ENCODE measurements at regions of chr19 and their contacts with region 1.

Region 1: GRCh38 chr19:35757749-35758608 is at the start of gene PROSER3:
- DNase-seq: peak; percentile 99 to 100 (median 100)
- H3K4me3 ChIP-seq: peak within 1 kb of the TSS; percentile 90 to 91
- H3K4me3 Mint-ChIP-seq: peak within 1 kb of the TSS; percentile 94 to 100 (median 98)
- H3K27ac ChIP-seq: peak within 1 kb of the TSS; percentile 89
- H3K27ac Mint-ChIP-seq: peak within 1 kb of the TSS; percentile 94 to 99 (median 97)
- H3K4me1 ChIP-seq: peaks cover 36% of the 10 kb centered on the region
- H3K4me1 Mint-ChIP-seq: peaks cover 17 to 40% (median 27%) of the 10 kb centered on the region in 4 donors
- H3K27me3 ChIP-seq: no peaks in the 10 kb centered on the region
- H3K27me3 Mint-ChIP-seq: peaks cover 0 to 2% of the 10 kb centered on the region in 2 donors
- total RNA-seq, gene PROSER3: 45.1 to 46.5 TPM

Region 2: DNA sequence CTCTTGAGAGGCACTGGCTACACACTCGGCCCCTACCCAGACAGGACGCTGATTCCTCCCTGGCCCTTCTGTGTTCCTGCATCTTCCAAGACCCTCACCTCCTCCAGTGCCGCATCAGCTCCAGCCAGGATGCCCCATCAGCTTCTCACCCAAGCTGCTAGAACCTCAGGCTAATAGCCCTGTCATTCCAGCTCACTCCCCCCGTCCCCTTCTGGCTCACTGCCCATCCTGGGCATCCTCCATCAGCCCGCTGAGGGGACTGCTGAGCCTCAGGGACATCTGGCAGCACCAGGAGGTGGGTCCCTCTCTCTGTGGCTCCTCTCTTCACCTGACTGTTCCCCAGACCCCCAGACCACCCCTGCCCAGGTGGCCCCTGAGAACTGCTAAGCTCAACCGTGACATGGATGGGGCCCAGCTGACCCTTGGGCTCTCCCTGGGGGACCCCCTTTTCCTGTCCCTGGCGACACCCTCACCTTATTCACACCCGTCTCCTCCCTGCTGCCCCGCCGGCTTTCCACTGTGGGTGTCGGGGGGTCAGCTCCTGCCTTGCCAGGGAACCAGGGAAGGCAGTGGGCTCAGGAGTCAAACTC is 394.9 kb before region 1 on chr19:
- CTCF ChIA-PET with region 1: no interaction called
- POLR2A ChIA-PET with region 1: no interaction called
- intact Hi-C with region 1: no loop called
- DNase-seq: no peak
- H3K4me3 ChIP-seq: no peak overlapping the region
- H3K4me3 Mint-ChIP-seq: no peak overlapping the region
- H3K27ac ChIP-seq: no peak overlapping the region
- H3K27ac Mint-ChIP-seq: no peak overlapping the region
- H3K4me1 ChIP-seq: peaks cover 2% of the 10 kb centered on the region
- H3K4me1 Mint-ChIP-seq: peaks cover 3 to 4% (median 3%) of the 10 kb centered on the region in 4 donors
- H3K27me3 ChIP-seq: no peaks in the 10 kb centered on the region
- H3K27me3 Mint-ChIP-seq: peaks cover 3 to 7% of the 10 kb centered on the region in 2 donors

Region 3: DNA sequence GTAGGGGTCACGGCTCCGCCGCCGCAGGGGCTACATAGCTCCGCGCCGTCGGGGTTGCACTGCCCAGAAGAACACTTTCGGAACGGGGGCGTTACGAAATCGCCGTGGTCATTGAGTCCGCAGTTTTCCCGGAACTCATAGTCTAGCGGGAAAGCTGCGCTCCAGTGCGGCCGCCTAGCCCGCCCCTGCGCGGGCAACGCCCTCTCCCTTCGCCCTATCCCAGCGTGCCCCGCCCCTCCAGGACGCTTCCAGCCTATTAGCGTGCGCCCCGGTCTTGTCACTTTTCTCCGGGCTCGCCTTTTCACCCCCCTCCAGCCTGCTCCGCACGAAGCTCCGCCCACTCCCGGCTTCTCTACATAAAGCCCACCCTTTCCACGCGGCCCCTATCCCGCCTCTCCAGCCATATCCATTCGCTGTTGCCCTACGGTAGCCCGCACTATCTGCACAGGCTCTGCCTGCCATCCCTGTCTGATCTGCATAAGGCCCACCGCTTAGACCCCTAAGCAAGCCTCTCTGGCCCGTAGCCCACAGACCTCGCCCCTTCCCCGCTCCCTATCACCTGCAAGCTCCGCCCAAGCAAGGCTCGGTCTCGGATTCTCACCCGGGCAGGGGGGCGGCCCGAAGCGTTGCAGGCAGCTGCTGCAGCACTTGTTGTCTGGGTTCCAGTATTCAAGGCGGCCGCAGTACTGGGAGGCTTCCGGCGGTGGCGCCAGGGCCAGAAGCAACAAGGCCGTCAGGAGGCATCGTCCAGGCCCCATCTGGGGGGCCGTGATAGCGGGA is 17.4 kb before region 1 on chr19:
- CTCF ChIA-PET with region 1: no interaction called
- POLR2A ChIA-PET with region 1: interaction called, 23 read pairs
- intact Hi-C with region 1: no loop called
- DNase-seq: peak; percentile 90 to 97 (median 91)
- H3K4me3 ChIP-seq: peak overlapping the region; percentile 83 to 88
- H3K4me3 Mint-ChIP-seq: peak overlapping the region; percentile 88 to 98 (median 90)
- H3K27ac ChIP-seq: peak overlapping the region; percentile 77
- H3K27ac Mint-ChIP-seq: peak overlapping the region; percentile 93 to 99 (median 94)
- H3K4me1 ChIP-seq: peaks cover 59% of the 10 kb centered on the region
- H3K4me1 Mint-ChIP-seq: peaks cover 17 to 65% (median 42%) of the 10 kb centered on the region in 4 donors
- H3K27me3 ChIP-seq: no peaks in the 10 kb centered on the region
- H3K27me3 Mint-ChIP-seq: no peaks in the 10 kb centered on the region

Region 4: GRCh38 chr19:35775298-35776110 is 17.5 kb after region 1 on chr19 and contains the start of gene ARHGAP33:
- CTCF ChIA-PET with region 1: no interaction called
- POLR2A ChIA-PET with region 1: interaction called, 3 read pairs
- intact Hi-C with region 1: loop called (anchors 1 kb)
- DNase-seq: peak; percentile 97 to 98 (median 98)
- H3K4me3 ChIP-seq: peak within 1 kb of the TSS; percentile 21 to 65
- H3K4me3 Mint-ChIP-seq: peak within 1 kb of the TSS; percentile 79 to 95 (median 87)
- H3K27ac ChIP-seq: no peak within 1 kb of the TSS
- H3K27ac Mint-ChIP-seq: peak within 1 kb of the TSS; percentile 46 to 87 (median 72)
- H3K4me1 ChIP-seq: peaks cover 15% of the 10 kb centered on the region
- H3K4me1 Mint-ChIP-seq: peaks cover 11 to 37% (median 20%) of the 10 kb centered on the region in 4 donors
- H3K27me3 ChIP-seq: no peaks in the 10 kb centered on the region
- H3K27me3 Mint-ChIP-seq: no peaks in the 10 kb centered on the region
- total RNA-seq, gene ARHGAP33: 15.8 to 19.4 TPM

Region 5: DNA sequence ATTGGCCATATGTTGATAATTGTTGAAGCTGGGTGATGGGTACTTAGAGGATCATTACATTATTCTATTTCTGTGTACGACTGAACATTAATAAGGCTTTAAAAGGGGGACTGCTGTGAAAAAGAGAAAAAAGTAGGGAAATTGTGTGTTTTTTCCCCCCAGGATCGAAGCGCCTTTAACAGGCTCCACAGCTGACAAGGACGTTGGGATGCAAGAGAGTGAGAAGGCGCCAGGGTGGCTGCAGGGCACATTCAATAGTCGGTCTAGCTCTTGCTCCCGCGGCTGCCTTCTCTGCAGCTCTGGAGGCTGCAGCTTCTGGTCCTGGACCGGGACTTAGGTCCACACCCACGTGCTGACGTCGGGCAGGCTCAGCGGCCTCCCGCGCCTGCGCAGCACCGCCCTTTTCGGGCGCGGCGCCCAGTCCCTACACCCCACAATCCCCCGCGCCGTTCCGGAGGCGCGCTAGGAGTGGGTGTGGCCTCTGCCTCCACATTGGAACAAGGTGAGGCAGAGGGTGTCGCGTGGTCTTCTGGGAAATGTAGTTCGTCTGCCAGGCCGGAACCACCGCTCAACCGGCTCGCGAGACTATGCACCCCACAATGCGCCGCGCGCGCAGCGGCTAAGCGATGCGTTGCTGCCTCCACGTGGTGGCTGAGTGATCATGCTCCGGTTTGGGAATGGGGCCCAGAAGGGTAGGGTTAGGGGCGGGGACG is 173.3 kb after region 1 on chr19:
- CTCF ChIA-PET with region 1: no interaction called
- POLR2A ChIA-PET with region 1: no interaction called
- intact Hi-C with region 1: loop called (anchors 1 kb)
- DNase-seq: peak; percentile 99 to 100 (median 100)
- H3K4me3 ChIP-seq: peak overlapping the region in 1 of 2 donors; percentile 49
- H3K4me3 Mint-ChIP-seq: peak overlapping the region; percentile 76 to 85 (median 80)
- H3K27ac ChIP-seq: peak overlapping the region; percentile 54
- H3K27ac Mint-ChIP-seq: peak overlapping the region; percentile 86 to 97 (median 95)
- H3K4me1 ChIP-seq: peaks cover 47% of the 10 kb centered on the region
- H3K4me1 Mint-ChIP-seq: peaks cover 27 to 62% (median 38%) of the 10 kb centered on the region in 4 donors
- H3K27me3 ChIP-seq: no peaks in the 10 kb centered on the region
- H3K27me3 Mint-ChIP-seq: no peaks in the 10 kb centered on the region

Measured in CD4-positive, alpha-beta memory T cell (primary cell).